ENCODE measurements at regions of chr13 and their contacts with region 1.

Region 1: DNA sequence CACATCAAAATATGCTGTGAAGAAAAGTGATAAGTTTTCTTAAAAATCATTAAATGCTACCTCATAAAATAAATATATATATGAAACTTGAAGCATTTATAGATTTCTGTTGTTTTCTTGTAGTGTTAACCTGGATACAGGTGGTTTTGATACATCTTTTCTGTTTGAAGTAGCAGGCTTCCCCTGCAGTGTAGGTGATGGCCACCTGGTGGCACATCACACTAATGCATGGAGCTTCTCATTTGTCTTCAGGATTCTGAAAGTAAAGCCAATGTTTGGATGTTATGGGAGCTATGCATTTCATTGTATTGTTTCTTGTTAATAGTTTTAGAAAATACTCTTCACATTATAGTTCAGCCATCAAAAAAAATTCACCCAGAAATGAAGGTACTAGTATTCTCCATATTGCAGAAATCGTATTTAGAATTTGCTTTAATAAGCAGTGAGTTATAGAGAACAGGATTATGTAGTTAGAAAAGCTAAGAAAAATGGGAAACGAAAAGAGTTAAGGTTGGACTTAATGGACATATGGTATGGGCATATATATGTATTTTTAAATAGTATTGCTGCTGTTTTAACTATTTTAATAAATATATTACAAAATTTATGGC is 18.7 kb downstream of the GPR180 start:
- DNase-seq: peak; percentile 52
- H3K4me3 ChIP-seq: no peak overlapping the region
- H3K27ac ChIP-seq: no peak overlapping the region
- H3K4me1 ChIP-seq: peaks cover 6% of the 10 kb centered on the region
- H3K27me3 ChIP-seq: no peaks in the 10 kb centered on the region
- CTCF ChIP-seq: peak; percentile 62 to 68
- POLR2A ChIP-seq: no peak

Region 2: DNA sequence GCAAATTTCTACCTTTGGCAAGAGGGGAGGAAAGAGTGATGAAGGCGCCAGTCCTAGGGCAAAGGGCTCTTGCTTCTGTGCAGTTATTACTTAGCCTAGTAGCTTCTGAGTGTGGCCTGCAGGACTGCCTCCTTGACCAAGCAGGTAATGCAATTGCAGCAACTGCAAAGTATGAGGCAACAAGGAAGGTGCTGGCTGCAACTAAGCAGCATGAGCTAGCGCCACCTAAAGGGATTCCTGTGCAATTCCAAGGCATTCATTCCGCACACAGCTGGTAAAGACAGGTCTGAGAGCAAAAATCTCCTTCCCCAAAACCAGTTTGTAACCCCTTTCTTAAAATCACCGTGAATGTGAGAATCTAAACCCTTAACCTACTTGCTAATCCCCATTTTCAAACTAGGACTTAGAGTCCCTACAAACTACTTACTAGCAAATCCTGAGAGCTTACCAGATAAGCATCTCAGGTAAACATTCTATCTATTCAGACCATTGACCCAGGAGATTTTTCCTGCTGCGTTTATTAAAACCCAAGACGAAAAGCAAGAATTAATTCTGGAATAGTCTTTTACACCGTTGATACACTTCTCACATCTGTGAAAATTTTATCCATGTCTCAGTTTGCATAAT is 203.8 kb before region 1 on chr13:
- CTCF ChIA-PET with region 1: interaction called, 13 read pairs
- POLR2A ChIA-PET with region 1: no interaction called
- dilution Hi-C with region 1: no loop called
- intact Hi-C with region 1: no loop called
- DNase-seq: peak; percentile 2
- H3K4me3 ChIP-seq: no peak overlapping the region
- H3K27ac ChIP-seq: no peak overlapping the region
- H3K4me1 ChIP-seq: no peaks in the 10 kb centered on the region
- H3K27me3 ChIP-seq: no peaks in the 10 kb centered on the region
- CTCF ChIP-seq: peak; percentile 24 to 35
- POLR2A ChIP-seq: no peak

Region 3: GRCh38 chr13:94549232-94550061 is 70.9 kb before region 1 on chr13:
- CTCF ChIA-PET with region 1: interaction called, 30 read pairs
- POLR2A ChIA-PET with region 1: interaction called, 3 read pairs
- dilution Hi-C with region 1: no loop called
- intact Hi-C with region 1: no loop called
- DNase-seq: peak; percentile 96
- H3K4me3 ChIP-seq: peak overlapping the region; percentile 57 to 84 (median 81)
- H3K27ac ChIP-seq: peak overlapping the region; percentile 68
- H3K4me1 ChIP-seq: peaks cover 6% of the 10 kb centered on the region
- H3K27me3 ChIP-seq: no peaks in the 10 kb centered on the region
- CTCF ChIP-seq: no peak
- POLR2A ChIP-seq: peak; percentile 49

Region 4: DNA sequence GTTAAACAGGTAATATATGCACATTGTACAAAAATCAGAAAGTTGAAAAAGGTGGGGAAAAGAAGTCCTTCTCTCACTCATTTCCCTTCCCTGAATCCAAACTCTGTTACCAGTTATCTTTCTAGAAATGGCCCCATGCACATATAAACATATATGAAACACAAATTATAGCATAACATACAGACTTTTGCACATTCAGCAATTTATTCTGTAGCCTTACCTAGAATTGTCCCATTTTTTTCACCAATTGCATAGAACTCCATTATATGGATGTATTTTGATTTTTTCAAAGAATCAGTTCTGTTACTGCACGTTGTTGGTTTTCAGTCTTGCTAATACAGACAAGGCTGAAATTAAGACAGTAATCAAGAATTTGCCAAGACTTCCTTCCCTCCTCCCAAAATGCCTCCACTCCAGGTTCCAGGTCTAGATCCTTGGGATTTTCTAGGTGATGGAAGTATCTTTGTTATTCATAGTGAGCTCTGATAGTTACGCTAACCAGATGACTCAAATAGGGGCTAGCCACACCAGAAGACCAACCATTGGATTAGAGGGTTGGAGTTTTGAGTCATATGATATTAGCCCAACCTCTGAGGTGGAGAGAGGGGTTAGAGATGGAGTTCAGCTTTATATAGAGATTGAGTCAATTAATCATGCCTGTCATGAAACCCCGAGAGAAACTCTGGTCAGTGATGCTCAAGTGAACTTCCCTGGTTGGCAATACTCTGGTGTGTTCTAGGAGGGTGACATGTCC is 12.0 kb after region 1 on chr13:
- CTCF ChIA-PET with region 1: interaction called, 20 read pairs
- POLR2A ChIA-PET with region 1: no interaction called
- dilution Hi-C with region 1: no loop called
- intact Hi-C with region 1: no loop called
- DNase-seq: no peak
- H3K4me3 ChIP-seq: no peak overlapping the region
- H3K27ac ChIP-seq: no peak overlapping the region
- H3K4me1 ChIP-seq: no peaks in the 10 kb centered on the region
- H3K27me3 ChIP-seq: no peaks in the 10 kb centered on the region
- CTCF ChIP-seq: no peak
- POLR2A ChIP-seq: no peak

Region 5: DNA sequence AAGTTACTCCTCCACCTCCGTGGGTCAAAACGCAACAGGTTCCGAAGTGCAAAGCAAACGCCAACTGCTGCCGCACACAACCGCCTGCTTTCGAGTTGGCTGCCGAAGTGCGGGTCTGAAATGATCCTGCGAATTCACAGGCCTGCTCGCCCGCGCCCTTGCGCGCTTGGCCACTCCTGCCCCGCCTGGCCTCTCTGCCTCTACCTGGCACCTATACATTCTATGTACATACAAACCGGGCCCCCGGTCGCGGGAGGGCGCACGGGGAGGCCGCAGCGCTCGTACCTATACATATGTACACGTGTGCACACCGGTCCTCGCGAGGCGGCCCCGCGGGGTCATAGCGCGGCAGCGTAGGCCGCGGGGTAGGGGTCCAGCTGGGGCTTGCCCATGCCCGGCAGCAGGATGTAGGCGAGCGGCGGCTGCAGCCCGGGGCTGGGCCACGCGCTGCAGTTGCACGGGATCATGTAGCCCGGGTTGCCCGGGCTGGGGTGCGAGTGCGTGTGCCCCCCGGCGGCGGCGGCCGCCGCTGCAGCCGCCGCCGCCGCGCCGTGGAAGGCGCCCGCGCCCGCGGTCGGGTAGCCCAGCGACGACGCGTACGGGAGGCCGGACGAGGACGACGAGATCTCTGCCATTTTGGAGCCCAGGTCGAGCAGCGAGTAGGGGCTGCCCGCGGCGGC is 90.6 kb after region 1 on chr13:
- CTCF ChIA-PET with region 1: no interaction called
- POLR2A ChIA-PET with region 1: no interaction called
- dilution Hi-C with region 1: no loop called
- intact Hi-C with region 1: loop called (anchors 1 kb)
- DNase-seq: no peak
- H3K4me3 ChIP-seq: no peak overlapping the region
- H3K27ac ChIP-seq: no peak overlapping the region
- H3K4me1 ChIP-seq: peaks cover 12% of the 10 kb centered on the region
- H3K27me3 ChIP-seq: peaks cover 68 to 95% of the 10 kb centered on the region in 2 experiments
- CTCF ChIP-seq: peak; percentile 31 to 33
- POLR2A ChIP-seq: no peak

Region 6: GRCh38 chr13:95067303-95067702 is 446.9 kb after region 1 on chr13:
- CTCF ChIA-PET with region 1: no interaction called
- POLR2A ChIA-PET with region 1: no interaction called
- dilution Hi-C with region 1: no loop called
- intact Hi-C with region 1: no loop called
- DNase-seq: no peak
- H3K4me3 ChIP-seq: no peak overlapping the region
- H3K27ac ChIP-seq: no peak overlapping the region
- H3K4me1 ChIP-seq: peaks cover 7% of the 10 kb centered on the region
- H3K27me3 ChIP-seq: no peaks in the 10 kb centered on the region
- CTCF ChIP-seq: no peak
- POLR2A ChIP-seq: no peak